Activated B cell treated with CpG ODN at 0.5 μM for 24 hours (primary cell): ENCODE measurements at regions of chr20 and their contacts with region 1.

Region 1: DNA sequence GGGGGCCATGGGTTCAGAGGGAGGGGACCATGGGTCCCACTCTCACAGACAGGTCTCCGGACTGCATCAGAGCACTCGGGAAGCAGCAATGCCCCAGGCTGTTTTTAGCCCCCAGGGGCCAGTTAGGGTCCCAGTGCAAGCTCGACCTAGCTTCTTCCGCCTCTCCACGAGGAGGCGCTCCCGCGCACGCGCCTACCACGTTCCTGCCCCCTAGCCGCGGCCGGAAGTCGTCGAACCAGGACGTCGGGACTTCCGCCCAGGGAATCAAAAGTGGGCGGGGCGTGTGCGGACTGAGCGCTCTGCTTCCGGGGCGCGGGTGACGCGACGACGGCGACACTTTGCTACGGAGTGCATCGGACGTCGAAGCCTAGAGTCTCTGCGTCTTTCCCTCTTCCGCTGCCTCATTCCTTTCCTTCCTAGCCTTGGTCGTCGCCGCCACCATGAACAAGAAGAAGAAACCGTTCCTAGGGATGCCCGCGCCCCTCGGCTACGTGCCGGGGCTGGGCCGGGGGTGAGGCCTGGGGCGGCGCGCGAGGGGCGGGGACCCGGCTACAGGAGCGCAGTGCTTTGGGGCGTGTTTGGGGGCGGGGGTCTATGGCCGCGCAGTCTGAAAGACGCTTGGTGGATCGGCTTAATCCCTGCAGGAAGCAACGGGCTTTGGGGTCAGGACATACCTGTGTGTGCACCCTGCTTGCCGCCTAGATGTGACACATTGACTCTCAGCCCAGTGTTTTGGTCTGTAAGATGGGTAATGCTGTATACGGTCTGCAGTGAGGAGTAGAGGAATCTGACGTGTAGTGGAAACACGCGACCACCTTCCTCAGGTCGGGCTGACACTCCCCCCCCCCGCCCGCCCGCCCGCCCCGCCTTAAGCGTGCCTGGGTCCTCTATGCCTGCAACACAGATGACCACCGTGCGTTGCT is at the start of gene PRPF6:
- DNase-seq: peak; percentile 90
- ATAC-seq: peak; percentile 65
- H3K4me3 Mint-ChIP-seq: peak within 1 kb of the TSS; percentile 92
- H3K27ac Mint-ChIP-seq: peak within 1 kb of the TSS; percentile 94
- H3K4me1 Mint-ChIP-seq: peaks cover 50% of the 10 kb centered on the region
- H3K27me3 Mint-ChIP-seq: no peaks in the 10 kb centered on the region
- CTCF ChIP-seq: peak; percentile 25
- total RNA-seq, gene PRPF6: 75.7 and 75.8 TPM in 2 replicates

Region 2: GRCh38 chr20:62032609-62033368 is 1948.3 kb before region 1 on chr20:
- CTCF ChIA-PET with region 1: no interaction called
- POLR2A ChIA-PET with region 1: no interaction called
- intact Hi-C with region 1: no loop called
- DNase-seq: no peak
- ATAC-seq: no peak
- H3K4me3 Mint-ChIP-seq: no peak overlapping the region
- H3K27ac Mint-ChIP-seq: no peak overlapping the region
- H3K4me1 Mint-ChIP-seq: peaks cover 42% of the 10 kb centered on the region
- H3K27me3 Mint-ChIP-seq: no peaks in the 10 kb centered on the region
- CTCF ChIP-seq: no peak

Region 3: GRCh38 chr20:63955827-63956663 is 25.0 kb before region 1 on chr20 and contains the start of gene UCKL1:
- CTCF ChIA-PET with region 1: no interaction called
- POLR2A ChIA-PET with region 1: interaction called, 17 read pairs
- intact Hi-C with region 1: loop called (anchors 1 kb)
- DNase-seq: peak; percentile 87
- ATAC-seq: peak; percentile 78
- H3K4me3 Mint-ChIP-seq: peak within 1 kb of the TSS; percentile 87
- H3K27ac Mint-ChIP-seq: peak within 1 kb of the TSS; percentile 85
- H3K4me1 Mint-ChIP-seq: peaks cover 49% of the 10 kb centered on the region
- H3K27me3 Mint-ChIP-seq: no peaks in the 10 kb centered on the region
- CTCF ChIP-seq: no peak
- total RNA-seq, gene UCKL1: 43.6 and 49.7 TPM in 2 replicates

Region 4: DNA sequence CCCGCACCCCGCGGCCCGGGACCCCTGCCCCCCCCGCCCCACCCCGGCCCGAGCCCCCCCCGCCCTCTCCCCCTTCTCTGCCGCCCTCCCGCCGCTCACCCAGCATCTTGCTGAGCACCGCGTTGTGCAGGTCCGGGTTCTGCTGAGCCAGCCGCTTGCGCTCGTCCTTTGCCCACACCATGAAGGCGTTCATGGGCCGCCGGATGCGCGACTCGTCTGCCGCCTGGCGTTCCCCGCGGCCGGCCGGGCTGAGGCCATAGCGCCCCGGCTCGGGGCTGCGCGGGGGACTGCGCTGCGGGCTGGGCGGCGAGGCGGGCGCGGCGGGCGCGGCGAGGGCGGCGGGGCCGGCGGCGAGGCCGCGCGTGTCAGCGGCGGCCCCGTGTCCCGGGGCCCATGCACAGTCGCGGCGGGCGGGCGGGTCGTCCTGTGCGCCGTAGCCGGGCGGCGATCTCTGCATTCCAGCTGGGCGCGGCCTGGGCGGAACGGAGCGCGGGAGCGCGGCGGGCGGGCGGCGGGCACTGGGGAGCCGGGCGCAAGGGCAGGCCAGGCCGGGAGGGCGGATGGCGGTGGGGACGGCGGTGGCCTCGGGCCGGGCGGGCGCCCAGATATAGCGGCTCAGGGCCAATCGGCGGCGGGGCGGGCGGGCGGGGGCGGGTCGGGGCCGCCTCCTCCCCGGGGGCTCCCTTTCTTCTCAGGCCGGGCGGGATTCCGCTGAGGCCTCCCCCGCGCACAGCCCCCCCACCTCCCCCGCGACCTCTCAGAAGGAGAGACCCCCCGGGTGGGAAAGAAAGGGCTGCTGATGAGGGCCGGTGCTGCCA is 68.2 kb after region 1 on chr20 and contains the start of gene SOX18:
- CTCF ChIA-PET with region 1: no interaction called
- POLR2A ChIA-PET with region 1: no interaction called
- intact Hi-C with region 1: no loop called
- DNase-seq: no peak
- ATAC-seq: peak; percentile 62
- H3K4me3 Mint-ChIP-seq: peak within 1 kb of the TSS; percentile 35
- H3K27ac Mint-ChIP-seq: no peak within 1 kb of the TSS
- H3K4me1 Mint-ChIP-seq: peaks cover 6% of the 10 kb centered on the region
- H3K27me3 Mint-ChIP-seq: peaks cover 38% of the 10 kb centered on the region
- CTCF ChIP-seq: no peak
- total RNA-seq, gene SOX18: not detected in 2 replicates